ENCODE measurements at regions of chr6 and their contacts with region 1.

Region 1: GRCh38 chr6:43471399-43471798 is 6.0 kb upstream of the TJAP1 start:
- DNase-seq: no peak
- ATAC-seq: no peak
- H3K4me3 ChIP-seq: no peak overlapping the region
- H3K27ac ChIP-seq: no peak overlapping the region
- H3K4me1 ChIP-seq: no peaks in the 10 kb centered on the region
- H3K27me3 ChIP-seq: no peaks in the 10 kb centered on the region
- CTCF ChIP-seq: no peak

Region 2: DNA sequence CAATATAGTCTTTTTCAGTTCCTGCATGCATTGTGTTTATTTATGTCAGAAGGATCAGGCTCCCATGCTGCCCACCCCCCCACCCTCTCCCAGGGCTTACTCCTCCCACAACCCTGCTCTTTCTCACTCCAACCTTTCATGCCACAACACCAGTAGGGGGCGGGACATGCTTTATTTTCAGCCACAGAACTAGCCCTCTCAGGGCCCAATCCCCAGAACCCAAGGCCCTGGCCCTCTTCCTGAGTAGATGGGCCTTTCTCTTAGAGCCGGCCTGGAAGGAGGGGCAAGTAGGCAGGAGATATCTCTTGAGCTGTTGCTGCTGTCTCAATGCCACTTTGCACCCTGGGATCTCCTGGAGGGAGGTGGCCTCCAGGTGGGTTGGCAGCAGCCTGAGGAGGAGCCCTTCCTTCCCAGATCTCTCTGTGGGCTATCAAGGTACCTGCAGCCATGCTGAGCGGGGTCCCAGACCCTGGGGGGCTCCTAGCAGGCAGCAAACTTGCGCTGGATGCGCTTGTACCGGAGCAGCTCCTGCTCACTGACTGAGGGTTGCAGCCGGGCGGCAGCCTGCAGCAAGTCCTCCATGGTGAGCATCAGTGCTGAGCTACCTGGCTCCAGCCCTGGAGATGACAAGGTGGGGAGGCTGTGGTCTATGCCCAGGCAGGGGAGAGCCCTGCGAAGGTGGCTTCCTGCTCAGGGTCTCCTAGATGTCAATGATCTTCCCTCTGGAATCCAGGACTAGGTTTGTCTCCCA is 507.4 kb before region 1 on chr6:
- CTCF ChIA-PET with region 1: no interaction called
- POLR2A ChIA-PET with region 1: interaction called, 16 read pairs
- in situ Hi-C with region 1: no loop called
- intact Hi-C with region 1: no loop called
- DNase-seq: no peak
- ATAC-seq: peak; percentile 48
- H3K4me3 ChIP-seq: no peak overlapping the region
- H3K27ac ChIP-seq: no peak overlapping the region
- H3K4me1 ChIP-seq: peaks cover 7% of the 10 kb centered on the region
- H3K27me3 ChIP-seq: no peaks in the 10 kb centered on the region
- CTCF ChIP-seq: no peak; the same call in 1 of the 2 replicates

Region 3: DNA sequence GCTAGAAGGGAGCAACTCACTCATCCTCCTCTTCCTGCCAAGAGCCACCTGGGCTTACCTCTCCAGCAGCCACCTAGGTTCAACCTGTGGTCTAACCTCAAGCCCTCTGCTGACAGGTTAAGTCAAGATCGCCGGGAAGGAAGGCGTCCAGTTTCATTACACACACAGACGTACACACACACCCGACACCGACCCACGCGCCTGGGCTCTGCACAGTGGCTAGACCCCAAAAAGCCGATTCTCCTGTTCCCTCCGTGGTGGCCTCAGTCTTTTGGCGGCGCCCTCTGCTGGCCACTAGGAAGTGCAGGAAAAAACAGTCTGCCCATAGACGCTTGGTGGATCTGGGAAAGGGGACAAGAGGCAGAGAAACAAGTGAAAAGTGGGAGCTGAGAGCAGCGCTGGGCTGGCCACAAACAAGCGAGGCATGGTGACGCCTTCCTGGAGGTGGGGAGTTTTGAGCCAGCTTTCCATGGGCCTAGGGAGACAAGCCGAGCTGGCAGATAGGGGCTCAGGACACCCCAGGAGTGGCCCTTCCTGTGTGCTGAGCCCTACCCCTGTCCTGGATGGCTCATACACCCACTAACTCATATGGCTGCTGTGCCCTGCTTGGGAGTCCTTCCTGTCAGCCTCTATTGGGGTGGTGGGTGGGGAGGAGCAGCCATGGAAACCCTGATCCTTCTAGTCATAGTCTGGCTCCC is 603.2 kb after region 1 on chr6:
- CTCF ChIA-PET with region 1: no interaction called
- POLR2A ChIA-PET with region 1: no interaction called
- in situ Hi-C with region 1: no loop called
- intact Hi-C with region 1: no loop called
- DNase-seq: no peak
- ATAC-seq: peak; percentile 67
- H3K4me3 ChIP-seq: no peak overlapping the region
- H3K27ac ChIP-seq: peak overlapping the region; percentile 88
- H3K4me1 ChIP-seq: peaks cover 22% of the 10 kb centered on the region
- H3K27me3 ChIP-seq: no peaks in the 10 kb centered on the region
- CTCF ChIP-seq: peak; percentile 95